Left colon (tissue), 2 donors: ENCODE measurements at regions of chr1 and their contacts with region 1.

Region 1: DNA sequence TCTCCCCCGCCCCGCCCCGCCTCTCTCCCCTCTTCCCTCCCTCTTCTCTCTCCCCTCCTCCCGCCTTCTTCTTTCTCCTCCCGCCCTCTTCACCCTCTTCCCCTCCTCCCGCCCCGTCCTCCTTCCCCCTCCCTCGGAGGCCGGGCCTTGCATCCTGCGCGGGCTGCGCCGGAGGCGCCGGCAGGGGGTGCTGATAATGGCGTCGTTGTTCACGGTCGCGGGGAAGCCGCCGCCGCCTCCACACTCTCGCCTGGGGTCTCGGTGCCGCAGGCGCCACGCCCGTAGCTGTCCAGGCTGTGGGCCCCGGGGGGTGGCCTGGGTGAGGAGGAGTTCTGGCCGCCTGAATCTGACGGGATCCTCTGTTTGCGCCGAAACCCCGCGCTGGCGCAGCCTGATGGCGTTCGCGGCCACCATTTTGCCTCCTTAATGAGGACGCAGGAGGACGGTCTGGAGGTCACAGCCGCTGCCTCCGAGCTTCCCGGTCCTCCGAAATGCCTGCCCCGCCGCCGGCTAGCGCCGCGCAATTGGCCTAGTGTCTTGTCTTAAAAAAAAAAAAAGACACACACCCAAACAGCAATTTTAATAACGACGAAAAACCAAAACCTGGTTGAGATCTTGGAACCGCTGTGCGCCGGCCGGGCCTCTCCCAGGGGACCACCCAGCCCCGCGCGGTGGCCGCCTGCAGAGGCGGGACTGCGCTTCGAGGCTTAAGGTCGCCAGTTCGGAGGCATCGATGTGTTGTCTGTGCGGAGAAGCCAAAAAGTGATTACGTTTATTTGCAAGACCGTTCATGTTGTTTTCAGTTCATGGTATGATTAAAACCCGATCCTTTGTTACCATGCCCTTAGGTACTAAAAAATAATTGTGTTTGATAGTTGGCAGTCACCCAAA is 106.6 kb upstream of the HNRNPU start:
- DNase-seq: peak; percentile 92 to 95
- ATAC-seq: peak; percentile 87

Region 2: DNA sequence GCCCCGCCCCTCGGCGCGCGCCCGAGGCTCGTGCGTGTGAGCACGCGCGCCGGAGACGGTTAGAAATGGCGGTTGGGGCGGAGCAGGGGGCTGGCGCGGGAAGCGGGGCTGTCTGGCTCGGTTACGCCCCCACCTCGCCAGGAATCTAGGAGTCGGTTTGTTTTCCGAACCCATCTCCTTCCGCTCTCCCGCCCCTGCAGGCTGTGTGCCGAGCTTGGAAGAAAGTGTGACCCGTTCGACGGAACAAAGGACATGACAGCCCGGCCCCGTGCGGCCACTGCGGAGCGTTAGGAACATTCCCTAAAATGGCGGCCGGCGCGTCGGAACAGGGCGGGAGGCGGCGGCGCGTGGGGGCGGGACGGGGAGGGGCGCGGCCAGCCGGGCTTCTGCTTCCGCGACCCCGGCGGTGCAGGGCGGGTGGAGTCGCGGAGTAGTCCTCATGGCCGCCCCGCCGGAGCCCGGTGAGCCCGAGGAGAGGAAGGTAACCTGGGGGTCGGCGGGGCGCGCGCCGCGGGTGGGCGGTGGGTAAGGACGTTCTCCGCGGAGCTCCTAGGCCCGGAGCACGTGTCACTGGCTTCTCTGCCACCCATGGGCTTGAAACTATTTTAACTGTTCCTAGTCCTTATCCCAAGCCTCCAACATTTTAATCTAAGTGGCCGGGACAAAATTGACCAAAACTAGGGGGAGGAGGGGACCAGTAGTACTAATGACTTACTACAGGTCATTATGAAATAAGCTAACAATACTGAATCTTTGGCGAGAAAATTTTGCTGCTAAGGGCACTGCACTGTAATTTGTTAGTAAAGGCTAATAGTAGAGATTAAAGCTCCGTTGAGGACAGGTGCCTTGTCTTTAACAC is 135.4 kb before region 1 on chr1 and contains the start of gene COX20:
- intact Hi-C with region 1: loop called in 1 of 2 experiments (anchors 10 kb)
- DNase-seq: peak; percentile 88 to 94
- ATAC-seq: peak; percentile 80
- total RNA-seq, gene COX20: 21.8 to 30.5 TPM

Region 3: DNA sequence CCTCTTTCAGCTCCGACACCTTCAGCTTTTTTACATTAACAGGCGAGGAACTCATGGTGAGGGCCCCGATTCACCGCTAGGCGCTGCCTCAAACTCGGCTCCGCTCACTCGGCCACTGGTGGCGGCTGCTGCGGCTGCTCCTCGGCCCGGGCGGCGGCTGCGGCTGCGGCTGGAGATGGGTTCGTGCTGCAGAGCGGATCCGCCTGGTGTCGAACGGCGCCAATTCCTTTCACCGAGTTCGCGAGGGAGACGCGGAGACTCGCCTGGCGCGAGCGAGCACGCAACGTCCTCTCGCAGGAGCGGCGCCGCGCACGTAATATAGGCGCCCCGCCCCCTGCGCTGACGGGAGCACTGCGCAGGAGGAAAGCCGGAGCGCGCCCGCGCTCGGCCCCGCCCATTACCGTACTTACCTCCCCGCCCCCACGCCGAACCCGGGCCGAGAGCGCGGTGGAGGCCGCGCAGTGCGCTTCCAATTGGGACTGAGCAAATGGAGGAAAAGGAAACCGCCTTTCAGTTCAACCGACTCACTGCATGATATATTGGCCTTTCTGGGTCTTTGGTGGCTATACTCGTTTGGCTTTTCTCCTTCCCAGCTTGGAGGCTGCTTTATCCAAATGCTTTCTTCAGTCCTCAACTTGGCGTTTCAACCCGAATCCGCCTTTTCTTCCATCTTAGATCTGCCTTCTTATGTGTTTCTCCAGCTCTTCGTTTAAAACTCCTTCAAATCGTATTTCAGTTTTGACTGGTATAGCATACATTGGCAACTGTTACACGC is 106.5 kb before region 1 on chr1 and contains the start of gene HNRNPU:
- intact Hi-C with region 1: loop called in 1 of 2 experiments (anchors 10 kb)
- DNase-seq: peak; percentile 95 to 98
- ATAC-seq: peak; percentile 85
- total RNA-seq, gene HNRNPU: 188 to 225 TPM